ENCODE measurements at regions of chr14 and their contacts with region 1.

Region 1: GRCh38 chr14:81170104-81170828 is 50.5 kb downstream of the GTF2A1 start:
- DNase-seq: peak; percentile 86
- CTCF ChIP-seq: peak; percentile 80

Region 2: GRCh38 chr14:80954687-80955299 is 215.5 kb before region 1 on chr14:
- CTCF ChIA-PET with region 1: interaction called, 12 read pairs
- POLR2A ChIA-PET with region 1: no interaction called
- DNase-seq: peak; percentile 76
- CTCF ChIP-seq: peak; percentile 73

Region 3: GRCh38 chr14:80987235-80988032 is 182.8 kb before region 1 on chr14:
- CTCF ChIA-PET with region 1: interaction called, 41 read pairs
- POLR2A ChIA-PET with region 1: no interaction called
- DNase-seq: peak; percentile 68
- CTCF ChIP-seq: peak; percentile 94

Region 4: DNA sequence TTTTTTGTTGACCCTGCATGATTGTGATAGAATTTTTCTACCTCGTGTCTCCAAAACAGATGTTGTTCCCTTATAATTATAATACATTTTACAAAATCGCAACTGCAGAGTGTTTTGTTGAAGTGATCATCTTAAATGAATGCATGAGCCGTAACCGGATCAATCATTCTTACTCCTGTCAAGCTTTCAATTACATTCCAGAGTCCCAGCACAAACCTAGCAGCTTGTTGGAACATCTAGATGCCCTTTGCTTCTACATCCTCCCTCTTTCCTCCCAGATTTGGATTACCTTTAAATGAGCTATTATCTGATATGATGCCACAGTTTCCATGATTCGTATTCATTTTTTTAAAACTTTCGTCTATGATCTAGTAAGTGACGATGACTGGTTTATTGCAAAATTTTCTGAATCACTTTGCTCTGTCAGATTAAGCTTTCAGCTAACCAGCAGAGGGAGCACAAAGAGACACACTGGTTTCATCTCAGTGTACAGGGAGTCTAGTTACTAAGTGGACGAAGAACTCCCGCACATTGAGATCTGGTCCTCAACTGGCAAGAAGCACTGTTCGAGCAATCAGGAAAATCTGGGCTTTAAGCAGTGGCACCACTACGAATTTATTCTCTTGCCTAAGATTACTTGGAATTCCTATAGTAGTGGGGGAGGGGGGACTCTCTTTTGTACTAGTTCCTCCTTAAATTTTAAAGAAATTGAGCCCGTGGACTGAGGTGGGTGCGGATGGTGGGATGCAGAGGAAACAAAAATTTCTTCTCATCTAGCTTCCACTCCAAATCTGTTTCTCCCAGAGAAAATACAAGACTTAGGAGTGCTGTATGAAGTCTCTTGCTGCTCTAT is 174.0 kb before region 1 on chr14:
- CTCF ChIA-PET with region 1: interaction called, 104 read pairs
- POLR2A ChIA-PET with region 1: no interaction called
- DNase-seq: peak; percentile 38
- CTCF ChIP-seq: peak; percentile 67

Region 5: DNA sequence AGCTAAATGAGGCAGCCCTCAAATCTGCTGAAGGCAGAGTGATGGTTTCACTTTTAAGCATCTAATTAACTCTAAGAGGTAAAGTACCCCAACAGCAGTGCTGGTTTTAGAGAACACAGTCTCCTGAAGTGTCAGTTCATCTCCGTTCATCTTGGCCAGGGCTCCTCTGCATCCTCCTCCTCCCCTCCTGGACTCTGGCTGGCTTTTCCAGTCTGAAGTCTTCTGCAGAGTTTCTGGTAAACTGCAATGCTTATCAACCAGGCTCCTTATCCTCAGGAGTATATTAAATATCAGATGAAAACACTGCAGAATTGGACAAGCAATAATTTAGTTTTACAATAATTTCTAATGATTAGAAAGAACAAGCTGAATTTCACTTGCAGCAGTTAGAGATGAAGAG is 64.9 kb before region 1 on chr14:
- CTCF ChIA-PET with region 1: no interaction called
- POLR2A ChIA-PET with region 1: no interaction called
- DNase-seq: no peak
- CTCF ChIP-seq: no peak

Region 6: DNA sequence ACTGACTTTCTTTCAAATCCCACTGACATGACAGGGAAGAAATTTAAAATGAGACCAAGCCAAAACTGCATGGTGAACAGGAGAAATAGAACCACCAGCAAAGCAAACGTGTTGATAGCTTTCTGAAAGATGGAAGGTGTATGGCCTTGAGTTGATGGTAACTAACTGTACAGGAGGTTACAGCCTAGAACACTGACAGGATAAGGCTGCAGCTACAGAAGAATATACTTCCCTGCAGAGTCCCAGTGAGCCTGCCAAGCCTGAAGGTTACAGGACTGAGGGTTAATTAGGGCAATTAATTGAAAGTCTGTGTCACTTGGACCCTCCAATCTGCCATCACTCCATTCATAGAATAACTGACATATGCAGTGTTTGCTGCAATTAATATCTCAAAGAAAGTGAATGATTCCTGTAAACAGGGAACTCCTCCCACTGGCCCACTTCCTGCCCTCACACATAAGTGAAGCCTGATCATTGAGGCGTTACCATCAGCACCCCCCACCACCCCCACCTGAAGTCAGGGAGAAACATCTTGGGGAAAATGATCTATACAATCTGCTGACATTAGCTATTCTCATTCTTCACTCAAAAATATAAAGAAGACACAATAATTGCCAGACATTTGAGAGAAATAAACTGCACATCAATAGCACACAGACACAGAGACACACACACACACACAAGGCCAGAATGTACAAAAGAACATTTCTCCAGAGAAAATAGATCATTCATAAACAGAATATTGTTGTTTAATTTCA is 22.9 kb before region 1 on chr14:
- CTCF ChIA-PET with region 1: interaction called, 93 read pairs
- POLR2A ChIA-PET with region 1: no interaction called
- DNase-seq: no peak
- CTCF ChIP-seq: no peak

Region 7: GRCh38 chr14:81157431-81157830 is 12.8 kb before region 1 on chr14:
- CTCF ChIA-PET with region 1: interaction called, 93 read pairs
- POLR2A ChIA-PET with region 1: no interaction called
- DNase-seq: no peak
- CTCF ChIP-seq: no peak

Region 8: GRCh38 chr14:81187832-81188522 is 17.7 kb after region 1 on chr14:
- CTCF ChIA-PET with region 1: interaction called, 110 read pairs
- POLR2A ChIA-PET with region 1: no interaction called
- DNase-seq: no peak
- CTCF ChIP-seq: no peak

Region 9: GRCh38 chr14:81234278-81234677 is 64.0 kb after region 1 on chr14:
- CTCF ChIA-PET with region 1: no interaction called
- POLR2A ChIA-PET with region 1: no interaction called
- DNase-seq: no peak
- CTCF ChIP-seq: no peak

Region 10: DNA sequence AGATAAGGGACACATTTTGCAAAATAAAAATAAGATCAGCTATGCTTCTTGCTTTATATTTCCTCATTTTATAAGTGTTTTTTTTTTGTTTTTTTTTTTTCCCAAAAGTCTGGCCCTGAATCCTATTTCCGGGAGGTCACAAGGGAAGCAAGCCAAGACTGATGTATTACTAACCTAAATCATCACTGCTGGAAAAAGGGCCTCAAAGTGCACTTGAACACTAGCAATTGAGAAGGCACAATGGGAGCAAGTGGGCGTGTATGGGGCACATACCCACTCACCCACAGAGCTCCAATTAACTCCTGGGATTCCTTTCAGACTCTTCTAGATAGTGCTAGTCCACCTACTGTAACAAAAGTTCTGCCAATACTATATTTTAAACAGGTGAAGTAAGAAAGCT is 171.1 kb after region 1 on chr14:
- CTCF ChIA-PET with region 1: no interaction called
- POLR2A ChIA-PET with region 1: no interaction called
- DNase-seq: no peak
- CTCF ChIP-seq: no peak

Measured in GM10248 (cell line).